Mammary epithelial cell (primary cell): ENCODE measurements at regions of chr22 and their contacts with region 1.

Region 1: GRCh38 chr22:36352803-36353507 is 34.8 kb downstream of the MYH9 start:
- DNase-seq: peak; percentile 71
- H3K4me3 ChIP-seq: no peak overlapping the region
- H3K27ac ChIP-seq: peak overlapping the region; percentile 75
- H3K4me1 ChIP-seq: peaks cover 79% of the 10 kb centered on the region
- H3K27me3 ChIP-seq: no peaks in the 10 kb centered on the region
- CTCF ChIP-seq: no peak

Region 2: DNA sequence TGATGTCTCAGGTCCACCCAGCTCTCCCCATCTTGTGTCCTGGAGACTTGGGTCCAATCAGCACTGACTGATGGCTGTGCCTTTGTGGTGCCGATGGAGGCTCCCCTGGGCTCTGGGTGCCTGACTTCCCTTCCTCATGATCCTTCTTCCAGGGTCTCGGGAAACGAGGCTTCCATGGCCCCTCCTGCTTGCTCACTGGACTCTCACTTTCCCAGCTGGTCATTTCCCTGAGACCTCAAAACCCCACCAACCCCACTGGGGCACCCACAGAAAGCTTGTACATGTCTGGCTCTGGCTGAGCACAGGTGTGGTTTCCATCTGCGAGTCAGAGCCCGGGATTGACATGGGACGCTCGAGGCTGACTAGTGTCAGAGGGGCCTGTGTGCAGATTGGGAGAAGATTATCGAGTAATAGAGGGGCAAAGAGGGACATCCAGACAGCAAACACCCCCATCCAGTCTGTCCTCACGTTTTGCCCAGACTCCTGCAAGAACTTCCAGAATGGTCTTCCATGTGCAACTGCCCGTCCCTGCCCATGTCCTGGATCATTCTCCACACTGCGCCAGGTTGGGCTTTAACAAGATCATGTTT is 85.0 kb before region 1 on chr22:
- CTCF ChIA-PET with region 1: no interaction called
- dilution Hi-C with region 1: no loop called
- in situ Hi-C with region 1: no loop called
- intact Hi-C with region 1: no loop called
- DNase-seq: no peak
- H3K4me3 ChIP-seq: no peak overlapping the region
- H3K27ac ChIP-seq: no peak overlapping the region
- H3K4me1 ChIP-seq: no peaks in the 10 kb centered on the region
- H3K27me3 ChIP-seq: no peaks in the 10 kb centered on the region
- CTCF ChIP-seq: no peak

Region 3: GRCh38 chr22:36365020-36365411 is 12.1 kb after region 1 on chr22:
- CTCF ChIA-PET with region 1: no interaction called
- dilution Hi-C with region 1: no loop called
- in situ Hi-C with region 1: no loop called
- intact Hi-C with region 1: loop called (anchors 2 kb)
- DNase-seq: peak; percentile 97
- H3K4me3 ChIP-seq: no peak overlapping the region
- H3K27ac ChIP-seq: peak overlapping the region; percentile 76
- H3K4me1 ChIP-seq: peaks cover 95% of the 10 kb centered on the region
- H3K27me3 ChIP-seq: no peaks in the 10 kb centered on the region
- CTCF ChIP-seq: no peak

Region 4: GRCh38 chr22:36369922-36370791 is 17.2 kb after region 1 on chr22:
- CTCF ChIA-PET with region 1: no interaction called
- dilution Hi-C with region 1: no loop called
- in situ Hi-C with region 1: no loop called
- intact Hi-C with region 1: loop called (anchors 1 kb)
- DNase-seq: peak; percentile 74
- H3K4me3 ChIP-seq: no peak overlapping the region
- H3K27ac ChIP-seq: peak overlapping the region; percentile 74
- H3K4me1 ChIP-seq: peaks cover 97% of the 10 kb centered on the region
- H3K27me3 ChIP-seq: no peaks in the 10 kb centered on the region
- CTCF ChIP-seq: no peak